ENCODE measurements at regions of chr11 and their contacts with region 1.

Region 1: DNA sequence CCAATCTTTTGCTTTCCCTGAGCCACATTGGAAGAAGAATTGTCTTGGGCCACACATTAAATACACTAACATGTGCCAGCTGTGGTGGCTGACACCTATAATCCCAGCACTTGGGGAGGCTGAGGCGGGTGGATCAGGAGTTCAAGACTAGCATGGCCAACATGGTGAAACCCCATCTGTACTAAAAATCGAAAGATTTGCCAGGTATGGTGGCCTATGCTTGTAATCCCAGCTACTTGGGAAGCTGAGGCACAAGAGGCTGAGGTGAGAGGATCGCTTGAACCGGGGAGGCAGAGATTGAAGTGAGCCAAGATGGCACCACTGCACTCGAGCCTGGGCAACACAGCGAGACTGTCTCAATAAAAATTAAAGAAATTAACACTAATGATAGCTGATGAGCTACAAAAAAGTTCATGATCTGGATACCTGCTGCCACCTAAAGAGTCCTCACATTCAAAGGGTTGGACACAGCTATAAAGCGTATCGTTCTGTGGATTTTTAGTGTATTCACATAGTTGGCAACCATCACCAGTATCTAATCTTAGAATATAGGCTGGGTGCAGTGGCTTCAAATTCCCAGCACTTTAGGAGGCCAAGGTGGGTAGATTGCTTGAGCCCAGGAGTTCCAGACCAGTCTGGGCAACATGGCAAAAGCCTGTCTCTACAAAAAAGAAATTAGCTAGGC is 3.4 kb upstream of the LDHC start:
- DNase-seq: no peak
- H3K4me3 ChIP-seq: no peak overlapping the region
- H3K27ac ChIP-seq: no peak overlapping the region
- H3K4me1 ChIP-seq: no peaks in the 10 kb centered on the region
- H3K27me3 ChIP-seq: no peaks in the 10 kb centered on the region
- CTCF ChIP-seq: no peak

Region 2: GRCh38 chr11:18492888-18493287 is 84.2 kb after region 1 on chr11:
- intact Hi-C with region 1: loop called (anchors 10 kb)
- DNase-seq: no peak
- H3K4me3 ChIP-seq: no peak overlapping the region
- H3K27ac ChIP-seq: no peak overlapping the region
- H3K4me1 ChIP-seq: no peaks in the 10 kb centered on the region
- H3K27me3 ChIP-seq: no peaks in the 10 kb centered on the region
- CTCF ChIP-seq: no peak

Region 3: DNA sequence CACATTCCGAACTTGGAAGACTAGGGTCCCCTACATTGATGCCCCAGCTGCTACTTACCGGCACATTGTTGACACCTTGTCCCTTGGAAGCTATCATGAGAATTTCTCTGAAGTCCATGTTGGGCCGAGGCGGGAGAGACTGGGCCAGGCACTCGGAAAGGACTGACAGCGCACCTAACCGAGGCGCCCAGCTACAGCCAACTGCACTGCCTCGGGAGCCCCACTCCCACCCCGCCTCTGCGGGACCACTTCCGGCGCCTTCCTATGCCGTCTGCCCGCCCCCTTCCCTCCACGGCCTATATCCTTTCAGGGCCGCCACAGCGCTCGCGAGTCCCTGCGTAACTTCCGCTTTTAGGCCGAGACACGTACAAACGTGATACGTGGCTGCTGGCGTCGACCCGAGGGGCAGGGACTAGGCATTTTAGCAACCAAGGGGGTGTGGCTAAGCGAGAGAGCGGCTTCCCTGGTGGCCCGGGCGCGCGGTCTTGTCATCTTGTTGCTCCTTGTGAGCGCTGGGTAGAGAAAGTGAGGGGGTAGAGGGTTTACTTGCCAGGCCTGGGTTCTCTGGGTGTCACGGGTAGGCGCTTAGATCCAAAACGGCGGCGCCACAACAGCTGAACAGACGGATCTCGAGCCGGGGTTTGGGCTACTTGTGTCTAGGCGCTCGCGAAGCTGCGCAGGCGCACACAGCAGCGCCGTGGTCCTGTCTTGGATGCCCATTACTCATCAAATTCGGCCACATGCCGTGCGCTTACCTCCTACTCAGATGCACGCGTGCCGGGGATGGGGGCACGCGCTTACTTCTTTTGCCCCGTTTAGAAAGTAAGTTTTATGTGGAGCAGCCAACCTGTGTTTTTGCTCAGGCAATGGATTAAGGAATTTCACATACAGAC is 225.7 kb after region 1 on chr11 and contains the start of gene SPTY2D1:
- intact Hi-C with region 1: no loop called
- DNase-seq: peak; percentile 99 to 100
- H3K4me3 ChIP-seq: peak within 1 kb of the TSS; percentile 84 to 99
- H3K27ac ChIP-seq: peak within 1 kb of the TSS; percentile 96
- H3K4me1 ChIP-seq: peaks cover 0 to 12% of the 10 kb centered on the region in 2 donors
- H3K27me3 ChIP-seq: no peaks in the 10 kb centered on the region
- CTCF ChIP-seq: no peak
- total RNA-seq, gene SPTY2D1: 7.8 TPM

Region 4: DNA sequence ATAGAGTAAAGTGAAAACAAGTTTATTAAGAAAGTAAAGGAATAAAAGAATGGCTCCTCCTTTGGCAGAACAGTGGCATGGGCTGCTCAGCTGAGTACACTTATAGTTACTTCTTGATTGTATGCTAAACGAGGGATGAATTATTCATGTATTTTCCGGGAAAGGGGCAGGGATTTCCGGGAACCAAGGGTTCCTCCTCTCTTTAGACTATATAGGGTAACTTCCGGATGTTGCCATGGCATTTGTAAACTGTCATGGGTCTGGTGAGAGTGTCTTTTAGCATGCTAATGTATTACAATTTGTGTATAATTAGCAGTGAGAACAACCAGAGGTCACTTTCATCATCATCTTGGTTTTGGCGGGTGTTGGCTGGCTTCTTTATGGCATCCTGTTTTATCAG is 249.0 kb after region 1 on chr11:
- intact Hi-C with region 1: no loop called
- DNase-seq: no peak
- H3K4me3 ChIP-seq: no peak overlapping the region
- H3K27ac ChIP-seq: no peak overlapping the region
- H3K4me1 ChIP-seq: no peaks in the 10 kb centered on the region
- H3K27me3 ChIP-seq: no peaks in the 10 kb centered on the region
- CTCF ChIP-seq: no peak

Measured in ascending aorta (tissue), 2 donors.